Posterior vena cava (tissue), 2 donors: ENCODE measurements at regions of chr5 and their contacts with region 1.

Region 1: DNA sequence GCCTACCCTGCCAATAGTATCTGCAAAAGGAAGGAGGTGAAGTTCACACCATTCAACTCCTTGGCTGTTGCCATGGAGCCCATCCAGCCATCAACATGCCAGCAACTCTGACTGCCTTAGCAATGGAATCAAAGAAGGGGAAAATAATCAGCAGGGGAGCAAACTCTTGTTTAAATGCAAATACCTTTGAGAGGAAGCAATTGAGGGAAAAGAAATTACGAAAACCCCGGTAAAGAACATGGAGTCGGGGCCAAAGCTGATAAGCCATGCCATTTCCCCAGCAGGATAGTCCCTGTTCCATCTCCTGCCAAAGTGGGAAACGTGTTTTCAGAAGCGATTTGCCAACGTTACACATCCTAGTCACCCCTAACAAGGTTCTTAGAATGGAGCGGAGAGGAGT is 69.0 kb downstream of the MFAP3 start:
- DNase-seq: no peak

Region 2: DNA sequence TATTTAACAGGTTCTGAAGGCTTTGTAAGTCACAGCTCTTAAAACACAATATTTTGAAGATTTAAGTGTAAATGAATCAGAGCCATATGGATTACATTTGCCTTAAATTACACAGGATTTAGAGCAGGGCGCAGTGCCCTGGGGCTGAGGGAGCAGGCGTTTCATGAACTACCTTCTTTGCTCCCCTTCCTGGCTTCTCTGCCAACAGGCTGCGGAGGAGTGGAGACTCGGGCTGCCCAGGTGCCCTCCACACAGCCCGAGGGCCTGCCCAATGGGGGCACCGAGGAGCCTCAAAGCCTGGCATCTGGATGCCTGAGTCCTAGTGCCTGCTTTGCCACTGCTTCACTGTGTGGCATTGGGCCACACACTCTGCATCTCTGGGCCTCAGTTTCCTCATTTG is 460.8 kb after region 1 on chr5:
- intact Hi-C with region 1: loop called in 1 of 2 experiments (anchors 5 kb)
- DNase-seq: no peak

Region 3: DNA sequence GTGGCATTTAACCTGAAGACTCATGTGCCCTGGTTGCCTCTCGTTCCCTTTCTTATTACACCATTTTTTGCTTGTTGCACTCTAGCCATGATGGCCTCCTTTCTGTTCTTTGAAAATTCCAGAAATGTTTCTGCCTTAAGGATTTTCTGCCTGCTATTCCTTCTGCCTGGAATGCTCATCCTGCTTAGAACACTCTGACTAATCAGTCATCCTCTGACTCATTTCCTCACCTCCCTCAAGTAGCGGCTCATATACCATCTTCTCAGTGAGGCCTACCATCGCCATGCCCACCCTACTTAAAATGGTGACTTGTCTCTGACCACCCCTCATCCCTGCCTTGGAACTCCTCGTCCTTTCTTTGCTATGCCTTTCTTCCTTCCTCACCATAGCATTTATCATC is 974.6 kb after region 1 on chr5:
- intact Hi-C with region 1: no loop called
- DNase-seq: no peak